BJ (cell line): ENCODE measurements at regions of chr10 and their contacts with region 1.

Region 1: DNA sequence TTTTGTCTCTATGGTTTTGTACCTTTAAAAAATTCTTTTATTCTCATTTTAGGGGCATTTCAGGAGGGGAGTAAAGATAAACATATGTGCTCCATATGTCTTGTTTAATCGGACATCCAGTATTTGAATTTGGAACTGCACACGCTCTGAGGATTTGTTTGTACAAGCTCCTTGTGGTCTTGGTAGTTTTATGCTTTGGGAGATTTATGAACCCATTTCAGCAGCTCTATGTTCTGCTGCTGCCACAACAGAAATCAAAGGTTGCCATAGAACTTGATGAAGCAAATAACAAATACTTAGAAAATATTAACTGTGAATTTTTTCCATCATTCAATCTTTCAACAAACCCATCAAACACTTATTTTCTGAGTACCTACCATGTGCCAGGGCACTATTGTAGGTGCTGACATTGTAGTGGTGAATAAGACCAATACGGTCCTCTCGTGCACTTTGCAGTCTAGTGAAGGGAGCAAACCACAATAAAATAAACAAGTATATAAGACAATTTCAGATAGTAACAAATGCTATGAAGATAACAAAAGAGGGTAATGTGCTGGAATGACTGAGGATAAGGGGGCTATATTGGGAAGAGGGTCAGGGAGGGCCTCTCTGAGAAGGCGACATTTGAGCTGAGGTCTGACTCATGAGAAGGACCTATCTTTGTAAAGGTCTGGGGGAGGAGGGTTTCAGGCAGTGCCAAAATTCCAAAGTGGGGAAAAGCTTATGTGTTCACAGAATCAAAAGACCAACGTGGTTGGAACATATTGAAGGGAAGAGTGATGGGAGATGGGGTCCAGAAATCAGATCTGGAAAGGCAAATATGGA is 30.4 kb downstream of the MYPN start:
- DNase-seq: no peak
- H3K4me3 ChIP-seq: no peak overlapping the region
- H3K27me3 ChIP-seq: no peaks in the 10 kb centered on the region
- CTCF ChIP-seq: no peak

Region 2: DNA sequence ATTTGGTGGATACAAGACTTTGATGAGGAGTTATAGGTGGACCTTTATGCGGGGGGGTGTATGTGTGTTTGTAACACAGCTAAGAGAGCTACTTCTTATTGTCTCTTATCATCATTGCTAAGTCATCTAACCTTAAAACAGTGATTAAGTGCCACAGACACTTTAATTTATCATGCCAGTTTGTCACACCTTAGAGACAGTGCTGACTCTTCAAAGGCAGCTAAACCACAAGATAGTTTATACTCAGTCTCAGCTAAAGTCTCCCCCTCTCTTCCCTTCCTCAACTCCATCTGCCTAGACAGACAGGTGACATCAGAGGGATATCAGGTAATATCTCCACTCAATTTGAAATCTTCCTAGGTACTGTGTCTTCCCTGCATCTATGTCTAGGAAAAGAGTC is 11.8 kb after region 1 on chr10:
- CTCF ChIA-PET with region 1: interaction called, 10 read pairs
- POLR2A ChIA-PET with region 1: no interaction called
- DNase-seq: no peak
- H3K4me3 ChIP-seq: no peak overlapping the region
- H3K27me3 ChIP-seq: no peaks in the 10 kb centered on the region
- CTCF ChIP-seq: no peak